Activated T-helper 1 cell treated with anti-CD3 and anti-CD28 coated beads, Interleukin-12 subunit alpha, Interleukin-12 subunit beta, Interleukin-2, Interleukin-4 antibody, amounts not matched to agents 30 ng/mL and 10 ng/mL and 1 ng/mL, durations not matched to agents 14 hours and 24 hours and 36 hours (primary cell): ENCODE measurements at regions of chr11 and their contacts with region 1.

Region 1: DNA sequence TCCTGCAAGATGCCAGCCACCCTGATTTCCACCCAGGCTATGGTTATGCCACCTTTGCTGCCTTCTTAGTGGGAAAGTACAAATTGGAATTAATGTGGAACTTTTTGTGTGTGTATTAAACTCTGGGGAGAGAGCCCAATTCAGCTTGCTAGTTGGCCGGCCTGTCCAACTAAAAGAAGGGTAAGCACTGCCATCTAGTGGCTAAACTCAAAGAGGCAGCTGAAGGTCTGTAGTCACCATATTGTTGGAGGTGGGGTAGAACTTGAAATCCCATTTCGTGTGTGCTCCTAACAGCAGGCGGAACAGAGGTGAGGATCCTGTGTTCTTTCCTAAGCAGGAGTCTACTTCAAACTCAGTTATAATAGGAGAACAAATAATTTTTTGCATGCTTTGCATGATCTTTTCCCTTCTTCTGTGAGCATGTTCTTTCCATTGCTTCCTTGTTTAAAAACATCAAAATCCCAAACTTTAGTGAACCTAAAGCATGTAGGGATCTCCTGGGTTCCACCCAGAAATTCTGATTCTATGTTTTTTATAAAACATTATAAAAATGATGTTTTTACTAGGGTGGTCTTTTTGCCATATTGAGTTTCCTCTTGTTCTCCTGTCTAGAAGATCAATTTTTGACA is 138.8 kb upstream of the SORL1-AS1 start:
- DNase-seq: peak; percentile 65
- H3K4me3 Mint-ChIP-seq: no peak overlapping the region
- H3K27ac Mint-ChIP-seq: peak overlapping the region; percentile 35
- H3K4me1 Mint-ChIP-seq: peaks cover 23% of the 10 kb centered on the region
- H3K27me3 Mint-ChIP-seq: no peaks in the 10 kb centered on the region

Region 2: GRCh38 chr11:121194731-121195596 is 396.6 kb before region 1 on chr11:
- intact Hi-C with region 1: loop called (anchors 2 kb)
- DNase-seq: peak; percentile 34
- H3K4me3 Mint-ChIP-seq: no peak overlapping the region
- H3K27ac Mint-ChIP-seq: no peak overlapping the region
- H3K4me1 Mint-ChIP-seq: peaks cover 7% of the 10 kb centered on the region
- H3K27me3 Mint-ChIP-seq: peaks cover 16% of the 10 kb centered on the region

Region 3: DNA sequence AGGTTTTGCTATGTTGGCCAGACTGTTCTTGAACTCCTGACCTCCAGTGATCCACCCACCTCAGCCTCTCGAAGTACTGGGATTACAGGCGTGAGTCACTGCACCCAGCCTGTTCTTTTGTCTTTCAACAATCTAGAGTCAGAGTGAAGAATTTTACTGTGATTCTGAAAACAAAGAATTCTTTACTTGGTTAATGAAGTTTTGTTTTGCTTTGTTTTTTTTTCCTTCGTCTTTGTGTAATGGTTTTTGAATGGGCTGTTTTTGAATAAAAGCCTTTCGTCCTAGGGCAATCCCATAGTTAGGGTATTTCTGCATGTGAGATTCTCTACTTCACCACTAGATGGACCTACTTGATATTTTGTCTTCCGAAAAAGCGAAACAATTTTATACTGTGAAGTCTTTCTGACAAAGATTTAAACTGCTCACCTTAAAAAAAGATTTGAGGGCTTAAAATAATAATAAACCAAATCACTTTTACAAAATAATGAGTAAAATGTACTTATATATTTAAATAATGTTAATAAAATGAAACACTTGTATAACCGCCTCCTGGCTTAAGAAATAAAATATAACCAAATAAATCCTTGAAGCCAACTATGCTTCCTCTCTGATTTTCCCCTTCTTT is 342.4 kb before region 1 on chr11:
- intact Hi-C with region 1: loop called (anchors 1 kb)
- DNase-seq: no peak
- H3K4me3 Mint-ChIP-seq: no peak overlapping the region
- H3K27ac Mint-ChIP-seq: no peak overlapping the region
- H3K4me1 Mint-ChIP-seq: no peaks in the 10 kb centered on the region
- H3K27me3 Mint-ChIP-seq: peaks cover 5% of the 10 kb centered on the region

Region 4: DNA sequence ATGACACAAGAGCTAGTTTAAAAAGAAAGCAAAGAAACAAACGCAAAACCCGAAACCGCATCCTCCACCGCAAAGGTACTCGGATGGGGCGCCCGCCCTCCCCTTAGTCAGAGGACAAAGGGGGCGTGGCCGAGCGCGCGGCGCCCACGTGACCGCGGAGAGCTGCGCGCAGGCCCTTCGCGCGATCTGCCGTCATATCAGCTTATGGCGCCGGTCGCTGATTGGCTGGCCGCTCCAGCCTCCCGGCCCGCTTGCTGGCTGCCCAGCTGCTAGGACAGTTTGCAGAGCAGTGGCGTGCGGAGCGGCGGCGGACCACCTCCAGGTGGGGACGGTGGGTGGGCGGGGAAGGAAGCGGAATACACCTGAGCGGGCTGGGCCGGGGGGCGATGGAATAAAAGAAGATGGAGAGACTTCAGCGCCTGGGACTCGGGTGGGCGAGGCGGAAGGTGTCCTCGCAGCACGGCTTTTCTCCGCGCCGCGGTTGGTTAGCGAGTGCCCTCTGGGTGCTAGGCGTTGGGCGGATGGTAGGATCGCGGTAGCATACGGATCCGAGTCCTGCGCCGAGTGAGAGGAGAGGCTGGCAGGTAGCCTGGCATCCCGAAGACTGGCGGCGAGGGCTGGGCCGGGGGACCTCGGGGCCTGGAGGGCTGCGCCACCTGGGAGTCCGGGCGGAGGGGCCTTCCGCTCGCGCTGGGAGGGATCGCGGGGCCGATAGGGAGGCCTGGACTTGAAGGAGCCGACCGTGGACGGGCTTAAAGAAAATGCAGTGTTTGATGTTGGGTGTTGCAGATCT is 298.8 kb before region 1 on chr11 and contains the start of gene SC5D:
- intact Hi-C with region 1: loop called (anchors 1 kb)
- DNase-seq: peak; percentile 94
- H3K4me3 Mint-ChIP-seq: peak within 1 kb of the TSS; percentile 93
- H3K27ac Mint-ChIP-seq: peak within 1 kb of the TSS; percentile 97
- H3K4me1 Mint-ChIP-seq: peaks cover 53% of the 10 kb centered on the region
- H3K27me3 Mint-ChIP-seq: peaks cover 10% of the 10 kb centered on the region
- total RNA-seq, gene SC5D: 21.9 and 26.3 TPM in 2 replicates

Region 5: DNA sequence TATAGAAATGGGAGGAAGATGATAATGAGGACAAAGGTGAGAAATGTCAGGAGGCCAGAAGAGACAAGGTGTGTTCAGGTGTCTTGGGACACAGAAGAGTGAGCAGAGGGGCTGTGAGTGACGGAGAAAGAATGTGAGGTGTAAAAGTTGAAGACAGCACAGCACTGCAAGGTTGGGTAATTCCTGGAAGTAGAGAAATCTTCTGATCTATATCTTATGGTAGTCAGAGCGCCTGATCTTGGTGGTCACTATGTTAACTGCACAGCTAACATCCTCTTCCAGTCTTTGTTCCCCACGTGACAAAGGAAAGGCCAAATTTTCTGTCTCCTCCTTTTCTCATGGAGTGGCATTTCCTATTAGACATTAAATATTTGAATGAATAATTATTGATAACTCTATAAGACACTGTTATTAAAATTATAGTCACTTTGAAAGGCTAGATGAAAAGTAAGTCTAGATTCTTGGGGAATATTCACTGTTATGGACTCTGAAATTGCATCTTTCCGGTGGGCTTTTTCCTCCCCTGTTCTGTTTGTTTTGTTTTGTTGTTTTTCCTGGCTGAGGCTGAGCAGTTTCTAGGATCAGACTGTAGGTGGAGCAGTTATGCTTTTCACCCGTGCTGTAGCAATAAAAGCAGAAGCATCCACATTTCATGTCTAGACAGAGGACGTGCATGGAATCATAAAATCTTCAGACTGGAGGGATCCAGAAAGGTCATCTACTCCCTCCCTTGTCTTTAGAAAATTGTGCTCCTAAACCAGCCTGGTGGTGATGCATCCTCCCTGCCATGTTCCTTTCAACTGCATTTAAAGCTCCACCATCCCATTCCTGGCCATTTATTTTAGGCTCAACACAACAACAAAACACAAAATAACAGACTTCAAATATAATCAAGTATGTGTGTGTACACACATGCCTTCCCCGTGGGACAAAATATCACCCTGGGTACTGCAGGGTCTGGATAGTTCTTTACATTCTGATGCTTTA is 272.4 kb before region 1 on chr11:
- intact Hi-C with region 1: loop called (anchors 1 kb)
- DNase-seq: no peak
- H3K4me3 Mint-ChIP-seq: no peak overlapping the region
- H3K27ac Mint-ChIP-seq: no peak overlapping the region
- H3K4me1 Mint-ChIP-seq: peaks cover 24% of the 10 kb centered on the region
- H3K27me3 Mint-ChIP-seq: peaks cover 5% of the 10 kb centered on the region

Region 6: GRCh38 chr11:121431820-121432526 is 159.5 kb before region 1 on chr11:
- intact Hi-C with region 1: loop called (anchors 1 kb)
- DNase-seq: no peak
- H3K4me3 Mint-ChIP-seq: no peak overlapping the region
- H3K27ac Mint-ChIP-seq: peak overlapping the region; percentile 36
- H3K4me1 Mint-ChIP-seq: peaks cover 27% of the 10 kb centered on the region
- H3K27me3 Mint-ChIP-seq: peaks cover 3% of the 10 kb centered on the region